ENCODE measurements at regions of chr9 and their contacts with region 1.

Region 1: DNA sequence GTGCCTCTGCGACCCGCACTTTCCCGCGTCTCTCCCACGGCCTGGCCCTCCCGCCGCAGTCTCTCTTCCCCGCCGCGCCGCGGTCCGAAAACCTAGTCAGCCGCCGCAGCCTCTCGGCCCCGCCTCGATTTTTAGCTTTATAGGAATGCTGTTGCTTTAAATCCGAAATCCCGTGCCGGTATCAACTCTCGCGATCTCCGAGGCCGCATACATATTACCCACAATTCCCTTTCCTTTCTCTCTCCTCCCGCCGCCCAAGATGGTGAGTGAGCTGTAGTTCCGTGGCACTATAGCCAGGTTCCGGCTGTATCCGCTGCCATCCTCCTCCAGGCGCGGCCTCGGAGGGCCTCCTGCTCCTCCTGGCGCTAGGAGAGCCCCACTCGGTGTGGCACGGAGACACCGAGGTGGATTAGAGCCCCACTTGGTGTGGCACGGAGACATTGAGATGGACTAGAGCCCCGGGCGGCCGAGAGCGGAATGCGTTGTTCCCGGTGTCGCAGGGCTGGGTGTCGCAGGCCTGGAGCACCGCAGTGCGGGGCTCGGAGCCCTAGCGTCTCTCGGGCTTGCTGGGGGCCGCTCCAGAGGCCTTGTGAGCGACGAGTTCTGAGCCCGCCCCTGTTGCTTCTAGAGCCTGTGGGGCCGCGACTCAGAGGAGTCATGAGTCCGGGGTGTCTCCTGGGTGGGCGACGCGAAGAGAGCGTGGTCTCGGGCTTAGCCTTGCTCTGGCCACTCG is at the starts of genes MED22 and RPL7A:
- DNase-seq: peak; percentile 91
- H3K4me3 Mint-ChIP-seq: peak within 1 kb of the TSS; percentile 98
- H3K27ac Mint-ChIP-seq: peak within 1 kb of the TSS; percentile 96
- H3K4me1 Mint-ChIP-seq: peaks cover 33% of the 10 kb centered on the region
- H3K27me3 Mint-ChIP-seq: no peaks in the 10 kb centered on the region
- total RNA-seq, gene MED22: 35.2 and 36.4 TPM in 2 replicates
- total RNA-seq, gene RPL7A: 2,586 and 2,588 TPM in 2 replicates

Region 2: GRCh38 chr9:133417541-133418461 is 69.7 kb after region 1 on chr9 and contains the start of gene REXO4:
- intact Hi-C with region 1: loop called (anchors 5 kb)
- DNase-seq: peak; percentile 84
- H3K4me3 Mint-ChIP-seq: peak within 1 kb of the TSS; percentile 93
- H3K27ac Mint-ChIP-seq: peak within 1 kb of the TSS; percentile 88
- H3K4me1 Mint-ChIP-seq: peaks cover 44% of the 10 kb centered on the region
- H3K27me3 Mint-ChIP-seq: no peaks in the 10 kb centered on the region
- total RNA-seq, gene REXO4: 31.7 and 32.8 TPM in 2 replicates

Measured in activated T-helper 2 cell treated with anti-CD3 and anti-CD28 coated beads, Interferon-gamma antibody, Interleukin-2, Interleukin-4, amounts not matched to agents 10 μg/mL and 5 μg/mL and 100 μg/mL, durations not matched to agents 14 hours and 24 hours and 36 hours (primary cell).